Activated T-helper 2 cell treated with anti-CD3 and anti-CD28 coated beads, Interferon-gamma antibody, Interleukin-2, Interleukin-4, amounts not matched to agents 10 μg/mL and 5 μg/mL and 100 μg/mL, durations not matched to agents 14 hours and 24 hours and 36 hours (primary cell): ENCODE measurements at regions of chr1 and their contacts with region 1.

Region 1: DNA sequence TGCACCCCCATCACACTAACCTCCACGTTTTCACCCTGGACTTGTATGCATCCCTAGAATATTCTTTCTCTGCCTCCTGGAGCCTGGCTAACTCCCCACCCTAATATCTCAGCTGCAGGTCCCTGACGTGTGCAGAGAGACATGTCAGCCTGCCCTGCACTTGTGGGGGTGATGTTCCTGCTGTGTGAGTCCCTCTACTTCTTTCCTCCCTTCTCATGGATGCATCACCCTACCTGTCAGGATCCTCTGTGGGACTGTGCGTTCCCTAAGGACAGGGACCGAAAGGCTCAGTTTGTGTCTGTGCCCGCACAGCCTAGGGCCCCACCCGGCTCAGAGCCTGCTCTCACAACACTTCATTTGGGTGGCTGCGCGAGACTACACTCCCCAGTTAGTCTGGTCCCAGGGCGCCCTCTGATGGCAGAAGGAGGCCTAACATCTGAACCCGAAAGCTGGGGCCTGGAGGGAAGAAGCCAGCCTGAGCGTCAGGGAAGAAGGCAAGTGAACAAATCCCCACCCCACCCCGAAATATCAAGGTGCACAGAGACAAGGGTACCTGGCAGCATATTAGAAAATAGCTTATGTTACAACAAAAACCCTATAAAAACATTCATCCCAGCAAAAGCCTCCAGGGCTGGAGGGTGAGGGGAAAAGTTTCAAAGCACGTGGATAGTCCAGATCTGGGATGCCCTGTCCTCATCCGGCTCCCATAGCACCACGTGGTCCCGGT is 3.7 kb downstream of the CD52 start:
- DNase-seq: peak; percentile 87
- H3K4me3 Mint-ChIP-seq: peak overlapping the region; percentile 83
- H3K27ac Mint-ChIP-seq: peak overlapping the region; percentile 95
- H3K4me1 Mint-ChIP-seq: peaks cover 35% of the 10 kb centered on the region
- H3K27me3 Mint-ChIP-seq: no peaks in the 10 kb centered on the region

Region 2: GRCh38 chr1:26279456-26280332 is 41.8 kb before region 1 on chr1 and contains the start of gene SH3BGRL3:
- intact Hi-C with region 1: loop called (anchors 1 kb)
- DNase-seq: peak; percentile 84
- H3K4me3 Mint-ChIP-seq: peak within 1 kb of the TSS; percentile 93
- H3K27ac Mint-ChIP-seq: peak within 1 kb of the TSS; percentile 97
- H3K4me1 Mint-ChIP-seq: peaks cover 76% of the 10 kb centered on the region
- H3K27me3 Mint-ChIP-seq: no peaks in the 10 kb centered on the region
- total RNA-seq, gene SH3BGRL3: 437 TPM in 2 replicates

Region 3: DNA sequence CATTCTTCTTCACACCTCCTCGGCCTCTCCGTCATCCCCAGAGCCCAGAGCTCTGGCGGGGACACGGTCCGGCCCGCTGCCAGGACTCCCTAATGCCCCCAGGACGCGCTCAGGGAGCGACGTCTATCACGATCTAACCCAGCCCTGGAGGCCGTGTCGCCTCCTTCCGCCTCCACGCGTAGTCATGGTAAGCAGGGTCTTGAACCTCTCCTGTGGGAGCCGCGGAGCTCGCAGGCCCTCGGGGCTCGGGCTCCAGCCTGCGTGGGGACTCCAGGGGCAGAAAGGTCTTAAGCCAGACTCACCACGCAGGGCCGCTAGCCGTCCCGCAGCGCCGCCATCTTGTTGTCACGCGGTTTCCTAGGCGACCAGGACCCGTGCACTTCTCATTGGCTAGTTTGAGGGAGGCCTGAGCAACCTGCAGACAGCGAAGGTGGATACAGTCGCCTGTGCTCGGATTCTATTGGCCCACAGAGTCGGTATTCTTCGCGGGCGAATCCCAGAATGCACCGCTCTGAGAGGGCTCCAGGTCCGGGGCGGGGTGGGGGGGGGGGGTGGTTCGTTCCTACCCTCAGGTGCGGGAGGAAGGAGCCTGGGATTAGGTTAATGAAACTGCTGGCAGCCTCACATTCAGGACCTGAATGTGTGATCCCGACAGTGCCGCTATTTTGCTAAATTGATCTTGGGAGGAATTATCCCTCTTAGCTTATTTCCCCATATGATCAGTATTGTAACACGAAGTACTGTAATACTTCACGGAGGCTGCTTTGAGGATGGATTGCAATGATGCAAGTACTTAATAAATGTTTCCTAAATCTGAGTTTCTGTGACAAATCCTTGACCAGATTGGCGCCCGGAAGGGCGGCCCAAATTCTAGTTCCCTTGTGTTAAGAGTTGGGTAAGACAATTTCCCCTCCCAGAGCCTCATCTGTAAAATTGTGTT is 14.9 kb before region 1 on chr1 and contains the start of gene UBXN11:
- intact Hi-C with region 1: loop called (anchors 1 kb)
- DNase-seq: peak; percentile 91
- H3K4me3 Mint-ChIP-seq: peak within 1 kb of the TSS; percentile 99
- H3K27ac Mint-ChIP-seq: peak within 1 kb of the TSS; percentile 93
- H3K4me1 Mint-ChIP-seq: peaks cover 25% of the 10 kb centered on the region
- H3K27me3 Mint-ChIP-seq: no peaks in the 10 kb centered on the region
- total RNA-seq, gene UBXN11: 13.1 and 14.2 TPM in 2 replicates

Region 4: GRCh38 chr1:26449868-26450267 is 128.4 kb after region 1 on chr1:
- intact Hi-C with region 1: no loop called
- DNase-seq: no peak
- H3K4me3 Mint-ChIP-seq: no peak overlapping the region
- H3K27ac Mint-ChIP-seq: no peak overlapping the region
- H3K4me1 Mint-ChIP-seq: no peaks in the 10 kb centered on the region
- H3K27me3 Mint-ChIP-seq: no peaks in the 10 kb centered on the region

Region 5: GRCh38 chr1:26472901-26473845 is 151.7 kb after region 1 on chr1:
- intact Hi-C with region 1: loop called (anchors 1 kb)
- DNase-seq: peak; percentile 92
- H3K4me3 Mint-ChIP-seq: peak overlapping the region; percentile 90
- H3K27ac Mint-ChIP-seq: peak overlapping the region; percentile 42
- H3K4me1 Mint-ChIP-seq: peaks cover 47% of the 10 kb centered on the region
- H3K27me3 Mint-ChIP-seq: no peaks in the 10 kb centered on the region